GM12878 (cell line): ENCODE measurements at regions of chr6 and their contacts with region 1.

Region 1: GRCh38 chr6:149190224-149190831 is 127.2 kb upstream of the TAB2 start:
- DNase-seq: no peak
- ATAC-seq: peak; percentile 95
- H3K4me3 ChIP-seq: no peak overlapping the region
- H3K27ac ChIP-seq: no peak overlapping the region
- H3K4me1 ChIP-seq: peaks cover 5% of the 10 kb centered on the region
- H3K27me3 ChIP-seq: no peaks in the 10 kb centered on the region
- CTCF ChIP-seq: peak; percentile 39 to 57 (median 51)
- EP300 ChIP-seq: no peak
- POLR2A ChIP-seq: no peak
- RAD21 ChIP-seq: peak; percentile 61

Region 2: DNA sequence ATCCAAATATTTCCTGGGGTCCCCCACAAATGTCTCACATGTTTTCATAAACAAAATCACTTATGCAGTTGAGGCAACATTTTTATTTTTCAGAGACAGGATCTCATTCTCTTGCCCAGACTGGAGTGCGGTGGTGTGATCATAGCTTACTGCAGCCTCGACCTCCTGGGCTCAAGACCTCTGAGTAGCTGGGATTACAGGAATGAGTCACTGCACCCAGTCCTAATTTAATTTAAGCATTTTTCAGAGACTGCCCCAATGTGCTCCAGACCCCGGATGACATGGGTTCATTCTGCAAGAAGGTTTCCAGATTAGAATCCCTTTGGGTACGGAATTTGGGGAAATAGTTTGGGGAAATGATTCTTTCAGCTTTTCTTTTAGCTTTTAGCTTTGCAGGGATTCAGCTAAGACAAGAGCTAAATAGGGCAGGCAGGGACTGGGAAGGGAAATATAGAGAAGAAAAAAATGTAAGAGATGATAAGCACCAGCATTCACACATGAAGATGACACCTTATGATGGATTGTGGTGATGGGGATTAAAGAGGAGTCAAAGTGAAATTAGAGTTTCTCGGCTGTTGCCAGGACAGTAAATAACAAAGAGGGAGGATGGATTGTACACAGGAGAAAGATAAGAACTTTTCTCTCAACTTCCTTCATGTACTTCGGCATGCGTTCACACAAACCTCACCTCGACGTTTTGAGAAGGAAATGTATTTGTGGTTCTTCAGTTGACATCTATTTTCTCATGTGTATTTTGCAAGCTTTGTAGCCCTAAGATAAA is 42.2 kb before region 1 on chr6:
- CTCF ChIA-PET with region 1: interaction called, 5 read pairs
- POLR2A ChIA-PET with region 1: interaction called, 5 read pairs
- RAD21 ChIA-PET with region 1: interaction called, 11 read pairs
- SMC1A ChIA-PET with region 1: interaction called, 6 read pairs
- in situ Hi-C with region 1: no loop called
- intact Hi-C with region 1: no loop called
- DNase-seq: no peak
- ATAC-seq: peak; percentile 93
- H3K4me3 ChIP-seq: no peak overlapping the region
- H3K27ac ChIP-seq: no peak overlapping the region
- H3K4me1 ChIP-seq: peaks cover 4% of the 10 kb centered on the region
- H3K27me3 ChIP-seq: no peaks in the 10 kb centered on the region
- CTCF ChIP-seq: no peak
- EP300 ChIP-seq: peak; percentile 62 to 71; a peak in 2 of 4 replicates
- POLR2A ChIP-seq: no peak
- RAD21 ChIP-seq: 0 out of 2 replicates have a peak, but pooled peaks have one; percentile 1

Region 3: GRCh38 chr6:149211046-149211571 is 20.8 kb after region 1 on chr6:
- CTCF ChIA-PET with region 1: interaction called, 4 read pairs
- POLR2A ChIA-PET with region 1: interaction called, 5 read pairs
- RAD21 ChIA-PET with region 1: interaction called, 20 read pairs
- SMC1A ChIA-PET with region 1: interaction called, 116 read pairs
- in situ Hi-C with region 1: no loop called
- intact Hi-C with region 1: no loop called
- DNase-seq: no peak
- ATAC-seq: peak; percentile 66
- H3K4me3 ChIP-seq: no peak overlapping the region
- H3K27ac ChIP-seq: peak overlapping the region; percentile 64
- H3K4me1 ChIP-seq: peaks cover 43% of the 10 kb centered on the region
- H3K27me3 ChIP-seq: no peaks in the 10 kb centered on the region
- CTCF ChIP-seq: no peak
- EP300 ChIP-seq: no peak
- POLR2A ChIP-seq: no peak
- RAD21 ChIP-seq: no peak

Region 4: GRCh38 chr6:149271348-149272340 is 81.3 kb after region 1 on chr6:
- CTCF ChIA-PET with region 1: interaction called, 10 read pairs
- POLR2A ChIA-PET with region 1: no interaction called
- RAD21 ChIA-PET with region 1: interaction called, 5 read pairs
- SMC1A ChIA-PET with region 1: interaction called, 14 read pairs
- in situ Hi-C with region 1: no loop called
- intact Hi-C with region 1: no loop called
- DNase-seq: peak; percentile 65
- ATAC-seq: peak; percentile 84
- H3K4me3 ChIP-seq: no peak overlapping the region
- H3K27ac ChIP-seq: peak overlapping the region; percentile 90
- H3K4me1 ChIP-seq: peaks cover 35% of the 10 kb centered on the region
- H3K27me3 ChIP-seq: no peaks in the 10 kb centered on the region
- CTCF ChIP-seq: no peak
- EP300 ChIP-seq: 0 out of 4 replicates have a peak, but pooled peaks of 1 of the 2 experiments have one; percentile 25
- POLR2A ChIP-seq: no peak
- RAD21 ChIP-seq: no peak

Region 5: GRCh38 chr6:149324428-149324827 is 134.1 kb after region 1 on chr6:
- CTCF ChIA-PET with region 1: interaction called, 10 read pairs
- POLR2A ChIA-PET with region 1: no interaction called
- RAD21 ChIA-PET with region 1: interaction called, 11 read pairs
- SMC1A ChIA-PET with region 1: interaction called, 14 read pairs
- in situ Hi-C with region 1: no loop called
- intact Hi-C with region 1: no loop called
- DNase-seq: no peak
- ATAC-seq: peak; percentile 28; the same call in 2 of the 3 replicates
- H3K4me3 ChIP-seq: no peak overlapping the region
- H3K27ac ChIP-seq: no peak overlapping the region
- H3K4me1 ChIP-seq: peaks cover 10% of the 10 kb centered on the region
- H3K27me3 ChIP-seq: no peaks in the 10 kb centered on the region
- CTCF ChIP-seq: no peak
- EP300 ChIP-seq: no peak
- POLR2A ChIP-seq: no peak
- RAD21 ChIP-seq: no peak

Region 6: GRCh38 chr6:150822932-150823331 is 1632.6 kb after region 1 on chr6:
- CTCF ChIA-PET with region 1: no interaction called
- POLR2A ChIA-PET with region 1: no interaction called
- RAD21 ChIA-PET with region 1: no interaction called
- SMC1A ChIA-PET with region 1: no interaction called
- in situ Hi-C with region 1: no loop called
- intact Hi-C with region 1: no loop called
- DNase-seq: no peak
- ATAC-seq: no peak
- H3K4me3 ChIP-seq: no peak overlapping the region
- H3K27ac ChIP-seq: no peak overlapping the region
- H3K4me1 ChIP-seq: no peaks in the 10 kb centered on the region
- H3K27me3 ChIP-seq: no peaks in the 10 kb centered on the region
- CTCF ChIP-seq: no peak
- EP300 ChIP-seq: no peak
- POLR2A ChIP-seq: no peak
- RAD21 ChIP-seq: no peak